GM12878 (cell line): ENCODE measurements at regions of chr13 and their contacts with region 1.

Region 1: DNA sequence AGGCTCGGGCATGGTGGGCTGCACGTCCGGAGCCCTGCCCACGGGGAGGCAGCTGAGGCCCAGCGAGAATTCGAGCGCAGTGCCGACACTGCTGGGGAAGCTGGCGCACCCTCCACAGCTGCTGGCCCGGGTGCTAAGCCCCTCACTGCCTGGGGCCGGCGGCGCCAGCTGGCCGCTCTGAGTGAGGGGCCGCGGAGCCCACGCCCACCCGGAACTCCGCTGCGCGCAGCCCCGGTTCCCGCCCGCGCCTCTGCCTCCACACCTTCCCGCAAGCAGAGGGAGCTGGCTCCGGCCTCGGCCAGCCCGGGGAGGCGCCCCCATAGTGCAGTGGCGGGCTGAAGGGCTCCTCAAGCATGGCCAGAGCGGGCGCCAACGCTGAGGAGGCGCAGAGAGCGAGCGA is 2080.4 kb downstream of the PCDH9 start:
- DNase-seq: no peak
- ATAC-seq: no peak
- H3K4me3 ChIP-seq: no peak overlapping the region
- H3K27ac ChIP-seq: no peak overlapping the region
- H3K4me1 ChIP-seq: no peaks in the 10 kb centered on the region
- H3K27me3 ChIP-seq: no peaks in the 10 kb centered on the region
- CTCF ChIP-seq: no peak
- EP300 ChIP-seq: no peak
- POLR2A ChIP-seq: no peak
- RAD21 ChIP-seq: no peak

Region 2: GRCh38 chr13:64591971-64592370 is 557.7 kb before region 1 on chr13:
- CTCF ChIA-PET with region 1: no interaction called
- POLR2A ChIA-PET with region 1: no interaction called
- RAD21 ChIA-PET with region 1: no interaction called
- SMC1A ChIA-PET with region 1: no interaction called
- in situ Hi-C with region 1: no loop called
- intact Hi-C with region 1: no loop called
- DNase-seq: no peak
- ATAC-seq: no peak
- H3K4me3 ChIP-seq: no peak overlapping the region
- H3K27ac ChIP-seq: no peak overlapping the region
- H3K4me1 ChIP-seq: no peaks in the 10 kb centered on the region
- H3K27me3 ChIP-seq: no peaks in the 10 kb centered on the region
- CTCF ChIP-seq: no peak
- EP300 ChIP-seq: no peak
- POLR2A ChIP-seq: no peak
- RAD21 ChIP-seq: no peak

Region 3: GRCh38 chr13:64928696-64929499 is 220.8 kb before region 1 on chr13:
- CTCF ChIA-PET with region 1: no interaction called
- POLR2A ChIA-PET with region 1: no interaction called
- RAD21 ChIA-PET with region 1: no interaction called
- SMC1A ChIA-PET with region 1: interaction called, 3 read pairs
- in situ Hi-C with region 1: no loop called
- intact Hi-C with region 1: loop called (anchors 5 kb)
- DNase-seq: no peak
- ATAC-seq: peak; percentile 93
- H3K4me3 ChIP-seq: no peak overlapping the region
- H3K27ac ChIP-seq: peak overlapping the region; percentile 12; the same call in 1 of the 2 replicates
- H3K4me1 ChIP-seq: no peaks in the 10 kb centered on the region
- H3K27me3 ChIP-seq: no peaks in the 10 kb centered on the region
- CTCF ChIP-seq: no peak
- EP300 ChIP-seq: no peak
- POLR2A ChIP-seq: no peak
- RAD21 ChIP-seq: no peak

Region 4: GRCh38 chr13:64993514-64994164 is 156.0 kb before region 1 on chr13:
- CTCF ChIA-PET with region 1: no interaction called
- POLR2A ChIA-PET with region 1: interaction called, 5 read pairs
- RAD21 ChIA-PET with region 1: interaction called, 7 read pairs
- SMC1A ChIA-PET with region 1: interaction called, 5 read pairs
- in situ Hi-C with region 1: no loop called
- intact Hi-C with region 1: loop called (anchors 10 kb)
- DNase-seq: peak; percentile 5
- ATAC-seq: peak; percentile 94
- H3K4me3 ChIP-seq: no peak overlapping the region
- H3K27ac ChIP-seq: no peak overlapping the region
- H3K4me1 ChIP-seq: no peaks in the 10 kb centered on the region
- H3K27me3 ChIP-seq: no peaks in the 10 kb centered on the region
- CTCF ChIP-seq: no peak
- EP300 ChIP-seq: peak in 1 of 2 experiments; percentile 43; a peak in 1 of 4 replicates
- POLR2A ChIP-seq: no peak
- RAD21 ChIP-seq: no peak

Region 5: DNA sequence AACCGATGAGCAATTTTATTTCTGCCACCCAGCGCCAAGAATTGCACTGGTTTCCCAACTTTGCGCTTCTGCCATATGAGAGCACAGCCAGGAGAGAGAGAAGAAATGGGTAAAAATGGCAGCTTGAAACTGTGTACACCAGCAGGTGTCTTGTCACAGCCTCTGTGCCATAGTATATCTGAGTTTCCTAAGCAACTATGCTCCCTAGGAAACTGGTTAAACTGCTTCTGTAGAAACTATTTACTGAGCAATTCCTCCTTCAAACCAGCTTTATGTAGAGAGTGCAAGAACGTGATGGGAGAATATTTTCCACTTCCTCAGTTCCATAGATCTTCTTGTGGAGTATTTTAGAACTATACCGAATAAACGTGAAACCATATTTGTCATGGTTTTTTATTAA is 719.2 kb after region 1 on chr13:
- CTCF ChIA-PET with region 1: no interaction called
- POLR2A ChIA-PET with region 1: no interaction called
- RAD21 ChIA-PET with region 1: no interaction called
- SMC1A ChIA-PET with region 1: no interaction called
- in situ Hi-C with region 1: no loop called
- intact Hi-C with region 1: no loop called
- DNase-seq: no peak
- ATAC-seq: no peak
- H3K4me3 ChIP-seq: no peak overlapping the region
- H3K27ac ChIP-seq: no peak overlapping the region
- H3K4me1 ChIP-seq: no peaks in the 10 kb centered on the region
- H3K27me3 ChIP-seq: no peaks in the 10 kb centered on the region
- CTCF ChIP-seq: no peak
- EP300 ChIP-seq: no peak
- POLR2A ChIP-seq: no peak
- RAD21 ChIP-seq: no peak